Gastrocnemius medialis (tissue), 4 donors: ENCODE measurements at regions of chr2 and their contacts with region 1.

Region 1: DNA sequence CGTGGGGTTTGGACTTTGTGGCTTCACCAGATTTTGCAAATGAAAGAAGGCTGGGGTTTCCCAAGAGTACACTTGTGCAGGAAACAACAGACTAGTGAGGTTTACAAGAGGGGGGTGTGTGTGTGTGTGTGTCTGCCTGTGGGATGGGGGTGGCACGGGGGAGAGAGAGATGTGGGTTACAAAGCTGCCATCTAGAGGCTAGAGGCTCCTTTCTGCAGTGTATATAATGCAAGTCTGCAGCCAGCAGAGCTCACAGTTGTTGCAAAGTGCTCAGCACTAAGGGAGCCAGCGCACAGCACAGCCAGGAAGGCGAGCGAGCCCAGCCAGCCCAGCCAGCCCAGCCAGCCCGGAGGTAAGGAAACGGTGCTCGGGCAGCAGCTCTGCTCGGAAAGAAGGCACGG is at the start of gene ACKR3:
- DNase-seq: peak; percentile 64 to 78
- ATAC-seq: peak; percentile 74 to 75
- H3K4me3 ChIP-seq: peak within 1 kb of the TSS; percentile 55 to 73 (median 58)
- H3K27ac ChIP-seq: peak within 1 kb of the TSS; percentile 76 to 80 (median 77)
- H3K4me1 ChIP-seq: peaks cover 37 to 38% of the 10 kb centered on the region in 2 donors
- H3K27me3 ChIP-seq: no peaks in the 10 kb centered on the region
- CTCF ChIP-seq: peak in 4 of 5 experiments; percentile 23 to 39 (median 36)
- POLR2A ChIP-seq: peak; percentile 64 to 72
- total RNA-seq, gene ACKR3: 7.1 to 55.0 (median 15.2) TPM

Region 2: GRCh38 chr2:234679741-234680687 is 1889.6 kb before region 1 on chr2:
- in situ Hi-C with region 1: no loop called
- intact Hi-C with region 1: no loop called
- DNase-seq: peak; percentile 42 to 71
- ATAC-seq: peak; percentile 74 to 81
- H3K4me3 ChIP-seq: no peak overlapping the region
- H3K27ac ChIP-seq: peak overlapping the region in 3 of 4 donors; percentile 16 to 50 (median 46)
- H3K4me1 ChIP-seq: no peaks in the 10 kb centered on the region
- H3K27me3 ChIP-seq: no peaks in the 10 kb centered on the region
- CTCF ChIP-seq: no peak
- POLR2A ChIP-seq: no peak

Region 3: DNA sequence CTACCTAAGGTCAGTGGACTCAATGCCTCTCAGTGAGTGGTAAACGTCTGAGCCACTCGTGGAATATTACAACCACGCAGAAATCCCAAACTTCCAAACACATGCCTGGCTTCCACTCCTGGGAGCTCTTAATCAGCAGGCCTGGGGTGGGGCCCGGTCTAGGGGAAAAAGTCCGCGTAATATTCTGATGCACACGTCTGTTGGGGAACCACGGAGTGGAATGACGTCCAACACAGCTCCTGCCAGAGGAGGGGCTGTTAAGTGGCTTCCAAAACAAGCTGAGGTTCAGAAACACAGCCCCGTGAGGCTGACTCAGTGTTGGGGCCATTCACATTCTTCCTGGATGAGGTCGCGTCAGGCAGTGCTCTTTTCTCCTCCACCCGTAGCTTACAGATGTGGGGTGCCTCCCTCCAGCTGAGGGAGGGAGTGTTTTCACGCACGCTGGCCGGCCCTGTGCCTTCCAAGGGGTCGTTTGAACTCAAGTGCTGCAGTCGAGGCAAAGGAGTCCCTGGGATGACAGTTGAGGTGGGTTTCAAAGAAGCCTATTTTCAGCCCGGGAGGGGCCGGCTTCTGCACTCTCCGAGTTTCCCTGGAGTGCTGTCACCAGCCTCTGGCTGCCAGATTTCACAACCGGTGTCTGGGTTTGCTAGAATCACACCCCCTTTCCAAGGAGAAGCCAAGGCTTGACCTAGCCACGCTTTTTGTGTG is 73.2 kb after region 1 on chr2:
- in situ Hi-C with region 1: no loop called
- intact Hi-C with region 1: loop called (anchors 5 kb)
- DNase-seq: peak; percentile 78 to 91
- ATAC-seq: peak; percentile 85
- H3K4me3 ChIP-seq: no peak overlapping the region
- H3K27ac ChIP-seq: peak overlapping the region; percentile 58 to 71 (median 66)
- H3K4me1 ChIP-seq: no peaks in the 10 kb centered on the region
- H3K27me3 ChIP-seq: peaks cover 0 to 3% (median 0%) of the 10 kb centered on the region in 3 donors
- CTCF ChIP-seq: no peak
- POLR2A ChIP-seq: peak in 1 of 2 donors; percentile 2

Region 4: GRCh38 chr2:236711440-236711839 is 141.9 kb after region 1 on chr2:
- in situ Hi-C with region 1: no loop called
- intact Hi-C with region 1: loop called (anchors 5 kb)
- DNase-seq: peak in 1 of 2 donors; percentile 58
- ATAC-seq: peak; percentile 34 to 49
- H3K4me3 ChIP-seq: no peak overlapping the region
- H3K27ac ChIP-seq: peak overlapping the region in 1 of 4 donors; percentile 8
- H3K4me1 ChIP-seq: peaks cover 7 to 8% of the 10 kb centered on the region in 2 donors
- H3K27me3 ChIP-seq: no peaks in the 10 kb centered on the region
- CTCF ChIP-seq: no peak
- POLR2A ChIP-seq: no peak

Region 5: GRCh38 chr2:236824877-236825692 is 255.5 kb after region 1 on chr2:
- in situ Hi-C with region 1: no loop called
- intact Hi-C with region 1: loop called (anchors 5 kb)
- DNase-seq: peak; percentile 20 to 51
- ATAC-seq: peak in 1 of 2 donors; percentile 70
- H3K4me3 ChIP-seq: no peak overlapping the region
- H3K27ac ChIP-seq: peak overlapping the region in 3 of 4 donors; percentile 23 to 49 (median 39)
- H3K4me1 ChIP-seq: peaks cover 11 to 20% of the 10 kb centered on the region in 2 donors
- H3K27me3 ChIP-seq: no peaks in the 10 kb centered on the region
- CTCF ChIP-seq: no peak
- POLR2A ChIP-seq: no peak

Region 6: GRCh38 chr2:236988690-236989624 is 419.4 kb after region 1 on chr2:
- in situ Hi-C with region 1: no loop called
- intact Hi-C with region 1: loop called (anchors 2 kb)
- DNase-seq: peak; percentile 84 to 92
- ATAC-seq: peak; percentile 89 to 92
- H3K4me3 ChIP-seq: peak overlapping the region in 2 of 4 donors; percentile 8 to 16
- H3K27ac ChIP-seq: peak overlapping the region; percentile 71 to 85 (median 81)
- H3K4me1 ChIP-seq: peaks cover 18 to 38% of the 10 kb centered on the region in 2 donors
- H3K27me3 ChIP-seq: no peaks in the 10 kb centered on the region
- CTCF ChIP-seq: no peak
- POLR2A ChIP-seq: peak; percentile 47 to 71